Activated T-helper 2 cell treated with anti-CD3 and anti-CD28 coated beads, Interferon-gamma antibody, Interleukin-2, Interleukin-4, amounts not matched to agents 10 μg/mL and 5 μg/mL and 100 μg/mL, durations not matched to agents 14 hours and 24 hours and 36 hours (primary cell): ENCODE measurements at regions of chr22 and their contacts with region 1.

Region 1: GRCh38 chr22:41022470-41023298 is 69.7 kb upstream of the EP300 start:
- DNase-seq: peak; percentile 73
- H3K4me3 Mint-ChIP-seq: peak overlapping the region; percentile 83
- H3K27ac Mint-ChIP-seq: peak overlapping the region; percentile 79
- H3K4me1 Mint-ChIP-seq: peaks cover 12% of the 10 kb centered on the region
- H3K27me3 Mint-ChIP-seq: peaks cover 15% of the 10 kb centered on the region

Region 2: DNA sequence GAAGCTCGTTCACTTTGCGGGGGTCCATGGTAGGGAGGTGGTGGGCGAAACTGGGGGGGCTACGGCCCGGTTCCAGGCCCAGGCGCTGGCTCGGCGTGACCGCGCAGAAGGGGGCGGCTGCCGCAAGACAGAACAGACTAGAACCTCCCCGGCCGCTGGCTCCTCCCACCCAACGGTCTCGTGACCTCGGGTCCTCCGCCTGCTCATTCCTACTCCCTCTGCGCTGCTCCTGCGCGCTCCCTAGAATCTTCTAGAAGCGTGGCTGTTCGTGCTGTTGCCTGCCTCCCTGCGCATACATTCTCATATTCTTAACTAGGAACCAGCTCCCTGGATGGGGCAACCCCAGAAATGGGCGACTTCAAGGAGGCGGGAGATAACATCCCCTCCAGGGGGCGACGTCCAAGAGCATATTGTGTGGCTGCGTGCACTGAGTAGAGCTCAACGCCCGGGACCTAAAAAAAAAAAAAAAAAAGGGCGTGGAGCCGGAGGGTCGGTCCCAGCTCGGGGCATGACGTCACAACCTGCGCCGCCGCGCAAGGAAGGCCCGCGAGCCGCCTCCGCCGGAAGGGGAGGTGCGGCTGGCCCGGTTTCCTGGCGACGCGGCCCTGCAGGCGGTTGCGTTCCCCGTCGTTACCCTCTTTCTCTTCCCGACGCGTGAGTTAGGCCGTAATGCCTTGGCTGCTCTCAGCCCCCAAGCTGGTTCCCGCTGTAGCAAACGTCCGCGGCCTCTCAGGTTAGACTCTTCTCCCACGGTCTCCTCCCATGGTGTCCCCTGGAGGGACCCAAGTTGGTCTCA is 166.0 kb before region 1 on chr22 and contains the starts of genes ST13 and XPNPEP3:
- intact Hi-C with region 1: loop called (anchors 5 kb)
- DNase-seq: peak; percentile 96
- H3K4me3 Mint-ChIP-seq: peak within 1 kb of the TSS; percentile 96
- H3K27ac Mint-ChIP-seq: peak within 1 kb of the TSS; percentile 100
- H3K4me1 Mint-ChIP-seq: peaks cover 38% of the 10 kb centered on the region
- H3K27me3 Mint-ChIP-seq: no peaks in the 10 kb centered on the region
- total RNA-seq, gene ST13: 194 and 201 TPM in 2 replicates
- total RNA-seq, gene XPNPEP3: 17.5 and 17.9 TPM in 2 replicates

Region 3: GRCh38 chr22:41070665-41071331 is 48.1 kb after region 1 on chr22:
- intact Hi-C with region 1: no loop called
- DNase-seq: no peak
- H3K4me3 Mint-ChIP-seq: no peak overlapping the region
- H3K27ac Mint-ChIP-seq: no peak overlapping the region
- H3K4me1 Mint-ChIP-seq: peaks cover 9% of the 10 kb centered on the region
- H3K27me3 Mint-ChIP-seq: peaks cover 2% of the 10 kb centered on the region

Region 4: DNA sequence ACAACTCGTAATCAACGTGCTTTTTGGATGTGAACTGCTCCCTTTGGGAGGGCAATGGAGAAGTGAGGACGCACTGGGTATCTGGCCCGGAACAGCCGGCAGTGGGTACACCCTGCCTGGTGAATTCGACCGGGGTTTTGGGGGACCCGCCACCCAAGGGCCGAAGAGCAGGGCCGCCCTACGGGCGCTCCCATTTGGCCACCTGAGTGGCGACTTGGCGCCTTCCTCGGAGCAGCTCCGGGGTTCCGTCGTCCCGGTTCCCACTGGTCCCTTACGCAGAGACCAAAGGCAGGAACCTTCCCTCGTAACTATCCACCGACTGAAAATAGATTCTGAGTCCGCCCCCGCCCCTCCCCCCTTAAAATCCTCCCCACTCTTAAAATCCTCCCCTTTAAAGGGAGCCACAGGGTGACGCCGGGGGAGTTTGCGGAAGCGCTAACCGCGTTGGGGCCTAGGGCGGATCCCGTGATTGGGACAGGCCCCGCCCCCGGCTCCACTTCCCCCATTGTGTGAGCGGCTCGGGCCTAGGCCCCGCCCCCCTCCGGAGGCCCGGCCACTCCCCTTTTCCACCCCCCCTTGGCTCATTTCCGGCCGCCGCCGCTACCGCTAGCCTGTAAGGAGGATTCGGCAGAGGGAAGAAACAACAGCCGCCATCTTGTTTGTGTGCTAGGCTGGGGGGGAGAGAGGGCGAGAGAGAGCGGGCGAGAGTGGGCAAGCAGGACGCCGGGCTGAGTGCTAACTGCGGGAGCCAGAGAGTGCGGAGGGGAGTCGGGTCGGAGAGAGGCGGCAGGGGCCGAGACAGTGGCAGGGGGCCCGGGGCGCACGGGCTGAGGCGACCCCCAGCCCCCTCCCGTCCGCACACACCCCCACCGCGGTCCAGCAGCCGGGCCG is 68.7 kb after region 1 on chr22:
- intact Hi-C with region 1: loop called (anchors 1 kb)
- DNase-seq: peak; percentile 98
- H3K4me3 Mint-ChIP-seq: peak overlapping the region; percentile 96
- H3K27ac Mint-ChIP-seq: peak overlapping the region; percentile 100
- H3K4me1 Mint-ChIP-seq: peaks cover 27% of the 10 kb centered on the region
- H3K27me3 Mint-ChIP-seq: no peaks in the 10 kb centered on the region